PC-3 (cell line): ENCODE measurements at regions of chr3 and their contacts with region 1.

Region 1: DNA sequence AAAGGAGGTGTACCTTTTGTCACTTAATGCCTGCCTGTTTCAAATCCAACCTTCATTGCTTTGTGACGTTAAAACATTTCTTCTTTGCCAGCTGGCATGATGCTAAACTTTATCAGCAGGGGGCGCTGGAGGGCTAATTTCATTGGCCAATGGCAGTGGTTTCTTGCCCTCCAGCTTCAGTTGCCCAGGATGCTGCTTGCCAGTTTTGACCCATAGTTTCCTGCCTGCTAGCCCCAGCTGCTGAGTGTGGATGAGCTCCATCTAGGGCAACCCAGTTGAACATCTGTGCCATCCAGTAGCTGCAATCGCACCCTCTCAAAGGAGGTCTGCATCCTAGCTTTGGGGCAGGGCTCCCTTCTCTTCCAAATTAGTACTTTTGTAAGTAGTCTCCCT is 22.1 kb downstream of the ACKR2 start:
- DNase-seq: peak; percentile 85
- ATAC-seq: no peak; the same call in 1 of the 2 replicates
- H3K4me3 ChIP-seq: no peak overlapping the region
- H3K27ac ChIP-seq: no peak overlapping the region
- H3K4me1 ChIP-seq: peaks cover 43% of the 10 kb centered on the region
- H3K27me3 ChIP-seq: no peaks in the 10 kb centered on the region
- CTCF ChIP-seq: peak; percentile 91

Region 2: GRCh38 chr3:42590989-42591756 is 240.1 kb before region 1 on chr3:
- CTCF ChIA-PET with region 1: no interaction called
- POLR2A ChIA-PET with region 1: no interaction called
- intact Hi-C with region 1: loop called (anchors 5 kb)
- DNase-seq: no peak
- ATAC-seq: peak; percentile 6
- H3K4me3 ChIP-seq: peak overlapping the region; percentile 72
- H3K27ac ChIP-seq: peak overlapping the region; percentile 43
- H3K4me1 ChIP-seq: peaks cover 22% of the 10 kb centered on the region
- H3K27me3 ChIP-seq: no peaks in the 10 kb centered on the region
- CTCF ChIP-seq: no peak

Region 3: GRCh38 chr3:42613462-42613861 is 217.9 kb before region 1 on chr3:
- CTCF ChIA-PET with region 1: no interaction called
- POLR2A ChIA-PET with region 1: no interaction called
- intact Hi-C with region 1: no loop called
- DNase-seq: peak; percentile 53
- ATAC-seq: peak; percentile 74
- H3K4me3 ChIP-seq: no peak overlapping the region
- H3K27ac ChIP-seq: no peak overlapping the region
- H3K4me1 ChIP-seq: no peaks in the 10 kb centered on the region
- H3K27me3 ChIP-seq: no peaks in the 10 kb centered on the region
- CTCF ChIP-seq: peak; percentile 71

Region 4: DNA sequence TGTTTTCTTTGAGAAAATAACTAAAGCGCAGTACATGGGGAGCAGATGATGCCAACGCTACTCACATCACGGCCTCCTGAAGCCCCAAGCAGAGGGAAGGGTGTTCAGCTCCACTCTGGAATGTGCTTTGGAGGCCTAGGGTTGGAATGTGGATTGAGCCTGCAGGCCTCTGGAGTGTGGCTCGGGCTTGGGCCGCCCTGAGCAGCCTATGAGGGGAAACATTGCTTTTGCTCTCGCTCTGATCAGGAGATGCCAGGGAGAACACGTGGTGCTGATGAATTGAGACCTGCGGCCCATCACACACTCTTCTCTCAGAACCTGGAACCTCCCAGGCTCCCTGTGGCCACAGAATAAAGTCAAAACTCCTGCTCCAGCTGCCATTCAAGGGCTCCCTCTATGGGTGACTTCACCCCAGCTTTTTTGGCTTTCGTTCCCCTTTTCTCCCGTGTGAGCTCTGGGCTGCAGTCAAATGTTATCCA is 81.5 kb before region 1 on chr3:
- CTCF ChIA-PET with region 1: interaction called, 7 read pairs
- POLR2A ChIA-PET with region 1: no interaction called
- intact Hi-C with region 1: loop called (anchors 1 kb)
- DNase-seq: peak; percentile 23
- ATAC-seq: peak; percentile 34
- H3K4me3 ChIP-seq: no peak overlapping the region
- H3K27ac ChIP-seq: no peak overlapping the region
- H3K4me1 ChIP-seq: peaks cover 27% of the 10 kb centered on the region
- H3K27me3 ChIP-seq: no peaks in the 10 kb centered on the region
- CTCF ChIP-seq: peak; percentile 61

Region 5: GRCh38 chr3:42804106-42804830 is 27.0 kb before region 1 on chr3 and contains the start of gene HIGD1A:
- CTCF ChIA-PET with region 1: interaction called, 4 read pairs
- POLR2A ChIA-PET with region 1: interaction called, 13 read pairs
- intact Hi-C with region 1: loop called (anchors 1 kb)
- DNase-seq: peak; percentile 98
- ATAC-seq: peak; percentile 96
- H3K4me3 ChIP-seq: peak within 1 kb of the TSS; percentile 97
- H3K27ac ChIP-seq: peak within 1 kb of the TSS; percentile 89
- H3K4me1 ChIP-seq: peaks cover 34% of the 10 kb centered on the region
- H3K27me3 ChIP-seq: no peaks in the 10 kb centered on the region
- CTCF ChIP-seq: no peak
- total RNA-seq, gene HIGD1A: 118 and 154 TPM in 2 replicates

Region 6: GRCh38 chr3:42846685-42847522 is 15.6 kb after region 1 on chr3:
- CTCF ChIA-PET with region 1: no interaction called
- POLR2A ChIA-PET with region 1: no interaction called
- intact Hi-C with region 1: no loop called
- DNase-seq: no peak
- ATAC-seq: no peak
- H3K4me3 ChIP-seq: no peak overlapping the region
- H3K27ac ChIP-seq: no peak overlapping the region
- H3K4me1 ChIP-seq: no peaks in the 10 kb centered on the region
- H3K27me3 ChIP-seq: no peaks in the 10 kb centered on the region
- CTCF ChIP-seq: no peak

Region 7: DNA sequence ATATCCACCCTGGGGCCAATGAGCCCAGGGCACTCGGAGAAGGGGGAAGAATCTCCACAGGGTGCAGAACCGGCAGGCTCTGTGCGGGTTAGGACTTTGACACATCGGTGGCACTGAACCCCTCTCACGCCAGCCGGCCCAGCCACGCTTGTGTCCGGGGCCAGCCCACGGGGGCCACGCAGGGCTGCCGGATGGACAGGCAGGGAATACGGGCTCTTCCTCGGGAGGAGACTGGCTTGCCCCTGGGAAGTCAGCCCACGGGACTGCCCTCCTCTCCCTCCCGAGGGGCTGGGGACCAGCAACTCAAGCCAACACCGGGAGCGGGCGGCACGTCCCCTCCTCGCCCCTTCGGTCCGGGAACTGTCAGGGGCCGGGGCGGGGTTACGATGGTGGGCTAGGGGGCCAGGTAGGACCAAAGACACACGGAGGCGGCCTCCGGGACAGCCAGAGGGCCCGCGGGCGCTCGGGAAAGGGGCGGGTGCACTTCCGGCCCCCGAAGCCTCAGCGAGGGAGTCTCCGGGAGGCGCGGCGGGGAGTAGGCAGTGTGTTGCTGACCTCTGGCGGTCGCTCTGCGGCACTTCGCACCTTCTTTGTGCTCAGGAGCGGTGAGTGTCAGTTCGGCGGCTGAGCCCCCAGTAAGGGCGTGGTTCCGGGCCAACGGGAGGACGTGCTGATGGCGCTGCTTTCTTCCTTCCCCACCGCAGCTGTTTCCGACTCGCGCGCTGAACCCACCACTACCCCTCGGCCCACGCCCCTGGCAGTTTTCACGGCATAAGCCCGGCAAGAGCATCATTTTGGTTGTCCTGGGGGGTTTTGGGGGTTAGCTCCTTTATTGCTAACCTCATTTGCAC is 49.5 kb after region 1 on chr3:
- CTCF ChIA-PET with region 1: interaction called, 3 read pairs
- POLR2A ChIA-PET with region 1: no interaction called
- intact Hi-C with region 1: loop called (anchors 1 kb)
- DNase-seq: peak; percentile 88
- ATAC-seq: peak; percentile 97
- H3K4me3 ChIP-seq: peak overlapping the region; percentile 68
- H3K27ac ChIP-seq: no peak overlapping the region
- H3K4me1 ChIP-seq: peaks cover 20% of the 10 kb centered on the region
- H3K27me3 ChIP-seq: no peaks in the 10 kb centered on the region
- CTCF ChIP-seq: peak; percentile 88

Region 8: DNA sequence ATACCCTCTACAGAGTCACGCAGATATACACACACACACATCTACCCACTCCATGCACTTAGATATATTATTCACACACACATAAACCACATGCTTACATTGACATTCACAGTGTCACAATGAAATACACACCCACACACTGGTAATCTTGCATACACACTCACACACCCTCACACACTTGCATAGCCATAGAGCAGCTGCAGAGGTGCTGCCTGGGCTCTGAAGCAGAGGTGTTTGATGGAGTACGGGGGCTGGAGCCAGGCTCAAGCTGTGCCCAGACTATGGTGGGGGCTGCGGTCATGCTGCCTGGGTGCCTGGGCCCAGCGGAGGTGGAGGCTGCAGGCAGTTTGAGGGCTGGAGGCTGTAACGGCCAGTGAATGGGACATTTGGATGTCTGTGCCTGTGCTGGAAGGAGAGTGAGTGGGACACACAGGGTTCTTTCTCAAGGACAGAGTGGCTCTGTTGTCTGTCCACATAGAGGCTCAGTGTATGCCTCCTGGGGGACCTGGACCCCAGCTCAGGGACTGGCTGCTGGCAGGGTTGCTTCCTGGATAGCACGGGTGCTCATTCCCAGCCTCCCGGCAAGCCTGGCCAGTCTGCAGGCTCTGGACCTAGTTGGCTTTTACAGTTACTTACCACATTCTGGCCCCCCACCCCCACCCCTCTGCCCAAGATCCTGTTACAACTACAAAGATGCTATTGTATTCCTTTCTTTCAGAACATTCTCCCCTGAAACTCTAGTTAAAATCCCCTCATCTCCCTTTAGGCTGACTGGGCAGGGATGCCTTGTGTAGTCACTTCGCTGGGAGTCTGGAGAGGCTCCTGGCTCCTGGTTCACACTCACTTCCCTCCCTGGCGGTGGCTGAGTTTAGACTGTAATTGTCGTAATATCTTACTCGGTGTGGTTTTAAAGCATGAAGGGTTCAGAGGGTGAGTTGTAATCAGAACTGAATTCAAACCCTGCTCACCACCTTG is 160.3 kb after region 1 on chr3:
- CTCF ChIA-PET with region 1: no interaction called
- POLR2A ChIA-PET with region 1: no interaction called
- intact Hi-C with region 1: no loop called
- DNase-seq: no peak
- ATAC-seq: no peak
- H3K4me3 ChIP-seq: no peak overlapping the region
- H3K27ac ChIP-seq: no peak overlapping the region
- H3K4me1 ChIP-seq: no peaks in the 10 kb centered on the region
- H3K27me3 ChIP-seq: peaks cover 8% of the 10 kb centered on the region; the same call in 1 of the 2 replicates
- CTCF ChIP-seq: no peak